Dorsolateral prefrontal cortex (tissue), 120 donors: ENCODE measurements at regions of chr21 and their contacts with region 1.

Region 1: DNA sequence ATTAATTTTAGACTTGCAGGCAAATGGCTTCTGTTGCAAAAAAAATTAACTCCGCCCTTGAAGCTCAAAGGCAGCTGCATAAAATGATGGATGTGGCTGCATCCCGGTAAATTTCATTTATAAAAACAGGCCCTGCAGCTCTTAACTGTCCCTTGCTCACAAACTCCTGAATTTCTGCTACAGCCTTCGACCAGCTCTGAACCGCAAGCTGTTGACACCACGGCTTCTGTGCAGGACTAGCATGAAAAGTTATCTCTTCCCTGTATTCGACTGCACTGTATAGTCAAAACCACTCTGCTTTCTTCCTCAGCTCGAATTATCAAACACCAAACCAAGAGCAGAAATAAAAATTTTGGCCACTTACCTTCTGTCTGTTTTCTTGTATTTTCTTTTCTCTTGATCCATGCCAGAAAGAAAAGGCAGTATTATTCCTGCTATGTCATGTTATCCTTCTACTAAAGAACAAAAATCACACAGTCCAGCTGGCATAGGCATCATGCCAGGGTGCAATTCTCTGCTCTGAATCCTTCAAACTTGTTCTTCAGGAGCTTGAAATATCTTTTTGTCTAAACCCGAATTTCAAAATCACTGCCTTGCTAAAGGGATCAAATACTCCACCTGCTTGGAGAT is 195.5 kb upstream of the NCAM2 start:
- DNase-seq: peak in 8 of 10 donors; percentile 30 to 82 (median 62)
- H3K4me3 ChIP-seq: peak overlapping the region; percentile 8 to 73 (median 52)
- H3K27ac ChIP-seq: peak overlapping the region; percentile 58 to 97 (median 91)
- H3K27me3 ChIP-seq: no peaks in the 10 kb centered on the region
- CTCF ChIP-seq: peak in 2 of 56 donors; percentile 5 to 8

Region 2: DNA sequence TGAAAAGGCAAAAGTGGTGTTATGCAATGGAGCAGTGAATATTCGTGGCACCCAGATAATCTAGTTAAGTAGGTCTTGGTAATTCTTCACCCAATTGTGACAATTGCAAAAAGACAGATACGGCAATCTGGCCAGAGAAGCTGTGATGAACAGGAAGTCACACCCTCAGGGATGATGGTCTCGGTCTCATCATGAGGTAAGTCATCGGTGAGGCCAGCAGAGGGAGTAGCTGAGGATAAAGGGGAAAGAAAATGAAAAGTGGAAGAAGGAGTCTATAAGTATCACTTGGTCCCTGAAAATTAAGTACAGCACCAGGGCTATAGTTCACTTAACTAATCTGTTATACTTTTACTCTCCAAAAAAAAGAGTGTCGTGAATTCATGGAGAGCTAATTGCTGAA is 63.3 kb before region 1 on chr21:
- intact Hi-C with region 1: loop called in 1 of 2 experiments (anchors 5 kb)
- DNase-seq: no peak
- H3K4me3 ChIP-seq: no peak overlapping the region
- H3K27ac ChIP-seq: peak overlapping the region in 5 of 59 donors; percentile 17 to 82 (median 33)
- H3K27me3 ChIP-seq: no peaks in the 10 kb centered on the region
- CTCF ChIP-seq: no peak

Region 3: GRCh38 chr21:20882462-20883407 is 80.0 kb after region 1 on chr21:
- intact Hi-C with region 1: loop called in 1 of 2 experiments (anchors 10 kb)
- DNase-seq: peak in 5 of 10 donors; percentile 5 to 66 (median 37)
- H3K4me3 ChIP-seq: peak overlapping the region in 1 of 59 donors; percentile 12
- H3K27ac ChIP-seq: peak overlapping the region in 17 of 59 donors; percentile 3 to 53 (median 30)
- H3K27me3 ChIP-seq: no peaks in the 10 kb centered on the region
- CTCF ChIP-seq: peak; percentile 45 to 78 (median 66)